A549 (cell line): ENCODE measurements at regions of chr12 and their contacts with region 1.

Region 1: GRCh38 chr12:93109551-93110203 is 180.6 kb upstream of the EEA1 start:
- DNase-seq: no peak
- ATAC-seq: no peak
- H3K4me3 ChIP-seq: no peak overlapping the region
- H3K27ac ChIP-seq: no peak overlapping the region
- H3K4me1 ChIP-seq: no peaks in the 10 kb centered on the region
- CTCF ChIP-seq: no peak
- EP300 ChIP-seq: no peak
- POLR2A ChIP-seq: no peak
- RAD21 ChIP-seq: no peak

Region 2: GRCh38 chr12:93098077-93098476 is 11.6 kb before region 1 on chr12:
- CTCF ChIA-PET with region 1: interaction called, 34 read pairs
- POLR2A ChIA-PET with region 1: no interaction called
- DNase-seq: peak in 1 of 2 experiments; percentile 71
- ATAC-seq: peak in 1 of 2 experiments; percentile 53; a peak in 3 of 6 replicates
- H3K4me3 ChIP-seq: no peak overlapping the region
- H3K27ac ChIP-seq: no peak overlapping the region
- H3K4me1 ChIP-seq: 0 out of 3 replicates have a peak, but pooled peaks cover 5% of the 10 kb centered on the region
- CTCF ChIP-seq: peak; percentile 46
- EP300 ChIP-seq: no peak
- POLR2A ChIP-seq: no peak
- RAD21 ChIP-seq: peak in 1 of 2 experiments; percentile 35; a peak in 2 of 5 replicates